ENCODE measurements at regions of chr1 and their contacts with region 1.

Region 1: DNA sequence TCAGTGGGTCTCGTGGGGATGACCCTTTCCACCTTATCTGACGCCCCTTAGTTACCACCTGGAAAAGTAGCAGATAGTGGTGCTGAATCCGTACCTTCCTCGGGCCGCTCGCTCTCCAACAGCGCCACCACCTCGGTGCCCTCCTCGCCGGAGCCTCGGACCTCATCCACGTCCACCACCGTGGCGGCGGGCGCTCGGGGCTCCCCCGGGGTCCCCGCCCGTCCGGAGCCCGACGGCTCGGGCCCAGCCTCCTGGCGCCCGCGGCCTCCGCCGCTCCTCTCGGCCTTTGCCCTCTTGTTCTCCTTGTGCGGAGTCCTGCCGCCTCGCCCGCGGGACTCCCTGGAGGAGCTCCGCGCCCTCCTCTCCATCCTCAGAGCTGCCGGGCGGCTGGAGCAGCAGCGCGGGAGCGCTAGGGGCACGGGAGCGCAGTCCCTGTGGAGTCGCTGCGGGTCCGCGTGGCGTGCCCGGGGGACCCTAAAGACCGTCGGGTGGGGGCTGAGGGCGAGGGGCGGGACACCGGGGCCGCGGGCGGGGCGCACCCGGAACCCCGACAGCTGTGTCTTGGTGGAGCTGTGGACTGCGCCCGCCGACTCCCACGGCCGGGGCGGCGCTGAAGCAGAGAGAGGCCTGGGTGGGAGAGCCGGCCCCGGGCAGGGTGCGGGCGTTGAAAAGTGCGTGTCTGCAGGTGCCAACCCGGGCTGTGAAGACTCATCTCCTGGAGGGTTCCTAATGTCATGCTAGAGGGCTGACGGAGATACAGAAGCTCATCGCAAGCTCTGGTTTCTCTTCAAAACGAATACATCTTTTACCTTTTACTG is at the start of gene NPHS2:
- DNase-seq: peak; percentile 48
- ATAC-seq: peak; percentile 88
- H3K4me3 Mint-ChIP-seq: peak within 1 kb of the TSS; percentile 67
- H3K27ac Mint-ChIP-seq: no peak within 1 kb of the TSS
- H3K4me1 Mint-ChIP-seq: peaks cover 8% of the 10 kb centered on the region
- H3K27me3 Mint-ChIP-seq: peaks cover 58% of the 10 kb centered on the region
- CTCF ChIP-seq: no peak
- total RNA-seq, gene NPHS2: not detected in 3 replicates

Region 2: DNA sequence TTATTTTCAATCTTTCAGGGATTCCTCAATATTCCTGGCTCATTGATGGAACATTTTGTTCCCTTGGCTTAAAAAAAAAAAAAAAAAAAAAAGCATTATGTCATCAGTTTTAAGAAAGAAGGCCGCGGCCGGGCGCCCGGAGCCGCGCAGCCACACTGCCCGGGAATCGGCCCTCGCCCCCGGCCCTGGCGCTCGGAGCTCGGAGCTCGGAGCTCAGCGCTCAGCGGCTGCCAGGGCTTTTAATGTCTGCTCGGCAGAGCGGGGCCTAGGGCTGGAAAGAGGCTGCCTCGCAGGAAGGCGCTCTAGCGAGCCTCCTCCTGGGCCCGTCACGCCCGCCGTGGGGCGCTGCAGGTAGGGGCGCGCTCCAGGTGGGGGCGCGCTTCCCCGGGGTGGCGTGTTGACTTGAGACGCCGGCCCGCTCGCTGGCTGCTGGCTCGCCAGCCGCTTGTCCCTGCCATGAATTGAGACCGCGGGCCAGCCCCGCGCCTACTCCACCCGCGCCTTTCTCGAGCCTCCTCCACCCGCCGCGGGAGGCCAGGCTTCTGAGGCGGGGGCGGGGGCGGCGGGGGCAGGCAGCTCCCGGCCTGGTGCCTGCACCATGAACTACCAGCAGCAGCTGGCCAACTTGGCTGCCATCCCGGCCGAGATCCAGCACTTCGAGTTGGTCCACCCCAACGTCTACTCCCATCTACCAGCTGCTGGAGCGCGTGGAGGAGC is 10.6 kb after region 1 on chr1:
- CTCF ChIA-PET with region 1: interaction called, 18 read pairs
- POLR2A ChIA-PET with region 1: interaction called, 6 read pairs
- DNase-seq: peak; percentile 76
- ATAC-seq: peak; percentile 88
- H3K4me3 Mint-ChIP-seq: peak overlapping the region; percentile 57
- H3K27ac Mint-ChIP-seq: no peak overlapping the region
- H3K4me1 Mint-ChIP-seq: peaks cover 28% of the 10 kb centered on the region
- H3K27me3 Mint-ChIP-seq: peaks cover 76% of the 10 kb centered on the region
- CTCF ChIP-seq: peak; percentile 61

Measured in WTC11 (cell line).